ENCODE measurements at regions of chr16 and their contacts with region 1.

Region 1: DNA sequence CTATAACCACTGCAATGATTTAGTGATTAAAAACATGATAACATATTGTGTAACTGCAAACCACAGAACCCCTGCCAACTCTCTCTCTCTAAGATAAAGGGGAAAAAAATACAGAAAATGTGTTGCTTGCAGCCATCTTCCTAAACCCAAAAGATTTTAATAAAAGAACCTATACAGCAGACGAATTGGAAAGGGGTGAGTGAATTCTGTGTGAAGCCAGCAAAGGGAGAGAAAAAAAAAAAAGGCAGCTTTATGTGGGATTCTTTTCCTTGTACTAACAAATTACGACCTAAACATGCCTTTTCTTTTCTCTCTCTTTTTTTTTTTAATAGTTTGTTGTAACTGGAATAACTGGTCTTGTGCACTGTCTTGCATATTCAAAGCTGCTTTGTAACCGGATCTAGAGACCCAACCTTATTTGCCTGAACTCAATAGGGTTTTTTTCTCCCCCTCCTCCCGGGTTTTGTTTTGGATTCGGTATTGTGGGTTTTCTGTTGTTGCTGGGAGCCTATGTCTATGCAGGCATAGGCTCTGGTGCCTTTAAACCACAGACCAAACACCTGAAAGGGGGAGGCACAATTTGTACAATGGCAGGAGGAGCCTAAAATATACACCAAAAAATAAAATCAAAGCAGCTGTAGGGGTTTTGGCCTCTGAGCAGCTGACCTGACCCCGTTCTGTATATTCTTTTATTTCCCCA is 7.0 kb upstream of the ZFHX3 start:
- H3K4me3 ChIP-seq: peak overlapping the region; percentile 17
- H3K27ac ChIP-seq: peak overlapping the region; percentile 96
- H3K4me1 ChIP-seq: peaks cover 48% of the 10 kb centered on the region
- CTCF ChIP-seq: no peak

Region 2: DNA sequence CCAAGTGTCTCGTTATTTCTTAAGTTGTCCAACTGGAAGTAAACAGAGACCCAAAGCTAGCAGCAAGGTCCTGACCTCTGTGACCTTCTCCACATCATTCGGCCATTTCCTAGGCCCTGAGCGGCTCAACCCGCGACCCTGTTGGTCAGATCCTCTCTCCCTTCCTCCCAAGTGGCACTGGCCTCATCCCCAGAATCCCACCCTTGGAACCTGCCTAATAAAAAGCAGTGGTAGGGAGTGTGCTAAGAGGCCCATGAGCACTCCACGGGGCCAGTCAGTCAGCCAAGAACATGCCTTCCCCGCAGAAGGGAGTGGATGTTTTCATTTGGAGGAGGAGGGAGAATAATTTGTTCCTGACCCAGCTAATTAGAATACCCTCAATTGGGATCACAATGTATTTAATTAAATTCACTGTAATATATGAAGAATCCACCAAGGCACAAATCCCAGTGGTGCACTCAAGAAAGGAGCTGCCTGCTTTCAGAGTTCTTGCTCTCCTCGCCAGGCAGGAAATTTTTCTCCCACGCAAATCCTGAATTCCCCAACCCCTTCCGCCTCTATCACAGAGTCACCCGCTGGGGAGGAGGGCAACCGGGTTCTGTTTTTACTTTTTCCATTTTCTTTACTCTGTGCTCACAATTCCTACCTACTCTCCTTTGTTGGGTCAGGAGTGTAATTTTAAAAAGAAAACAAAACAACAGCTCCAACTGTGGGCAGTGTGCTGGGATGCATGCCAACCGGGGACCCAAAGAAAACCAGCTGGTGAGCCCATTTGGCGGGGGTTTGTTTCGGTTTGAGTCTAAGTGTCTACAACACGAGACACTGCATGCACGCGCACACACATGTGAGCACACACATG is 160.4 kb before region 1 on chr16:
- CTCF ChIA-PET with region 1: no interaction called
- POLR2A ChIA-PET with region 1: no interaction called
- H3K4me3 ChIP-seq: no peak overlapping the region
- H3K27ac ChIP-seq: no peak overlapping the region
- H3K4me1 ChIP-seq: no peaks in the 10 kb centered on the region
- CTCF ChIP-seq: no peak

Region 3: DNA sequence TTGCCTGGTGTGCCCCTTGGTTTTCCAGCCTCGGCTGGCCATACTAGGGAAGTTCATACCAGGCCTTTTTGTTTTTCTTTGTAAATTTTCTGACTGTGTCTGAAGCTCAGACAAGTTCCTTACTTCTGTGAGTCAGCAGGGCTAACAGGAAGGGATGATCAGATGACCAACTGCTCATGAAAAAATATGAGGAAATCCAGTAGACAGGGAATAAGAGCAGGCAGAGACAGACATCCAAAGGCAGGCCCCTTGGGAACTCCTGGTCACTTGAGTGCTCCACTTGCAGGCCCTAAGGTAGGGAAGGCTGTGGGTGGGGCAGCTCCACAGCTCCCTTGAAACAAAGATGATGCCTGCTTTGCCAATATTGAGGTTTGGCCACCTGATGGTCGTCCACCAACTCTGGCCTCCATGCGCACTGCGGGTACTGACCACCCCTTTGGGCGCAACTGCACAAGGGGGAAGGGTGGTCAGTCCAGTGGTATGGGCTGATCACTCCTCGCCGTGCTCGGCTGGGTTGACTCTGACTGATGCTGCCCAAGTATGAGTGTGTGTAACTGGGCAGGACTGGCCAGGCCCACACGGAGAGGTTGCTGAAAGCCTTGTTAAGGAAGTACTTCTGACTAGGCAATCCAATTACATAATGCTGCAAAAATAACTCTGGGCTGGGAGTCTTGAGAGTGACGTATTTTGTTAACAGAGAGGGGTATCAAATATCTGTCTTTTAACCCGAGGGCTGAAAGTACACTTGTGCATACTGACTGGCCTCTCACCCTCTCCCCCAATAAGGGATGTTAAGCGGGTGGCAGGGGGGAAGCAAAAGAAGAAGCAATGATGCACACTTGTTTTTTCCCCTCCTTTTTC is 13.8 kb after region 1 on chr16:
- CTCF ChIA-PET with region 1: interaction called, 4 read pairs
- POLR2A ChIA-PET with region 1: interaction called, 12 read pairs
- H3K4me3 ChIP-seq: no peak overlapping the region
- H3K27ac ChIP-seq: peak overlapping the region; percentile 84
- H3K4me1 ChIP-seq: peaks cover 27% of the 10 kb centered on the region
- CTCF ChIP-seq: no peak

Region 4: GRCh38 chr16:73846356-73846755 is 791.4 kb after region 1 on chr16:
- CTCF ChIA-PET with region 1: no interaction called
- POLR2A ChIA-PET with region 1: no interaction called
- H3K4me3 ChIP-seq: no peak overlapping the region
- H3K27ac ChIP-seq: no peak overlapping the region
- H3K4me1 ChIP-seq: no peaks in the 10 kb centered on the region
- CTCF ChIP-seq: no peak

Measured in HEK293 (cell line).